Gastrocnemius medialis (tissue), 4 donors: ENCODE measurements at regions of chr17 and their contacts with region 1.

Region 1: GRCh38 chr17:48791128-48792032 is 25.6 kb downstream of the TTLL6 start:
- DNase-seq: peak; percentile 25 to 36
- ATAC-seq: peak in 1 of 2 donors; percentile 54
- H3K4me3 ChIP-seq: no peak overlapping the region
- H3K27ac ChIP-seq: no peak overlapping the region
- H3K4me1 ChIP-seq: no peaks in the 10 kb centered on the region
- H3K27me3 ChIP-seq: peaks cover 0 to 18% (median 5%) of the 10 kb centered on the region in 3 donors
- CTCF ChIP-seq: peak; percentile 27 to 55 (median 46)
- POLR2A ChIP-seq: no peak

Region 2: DNA sequence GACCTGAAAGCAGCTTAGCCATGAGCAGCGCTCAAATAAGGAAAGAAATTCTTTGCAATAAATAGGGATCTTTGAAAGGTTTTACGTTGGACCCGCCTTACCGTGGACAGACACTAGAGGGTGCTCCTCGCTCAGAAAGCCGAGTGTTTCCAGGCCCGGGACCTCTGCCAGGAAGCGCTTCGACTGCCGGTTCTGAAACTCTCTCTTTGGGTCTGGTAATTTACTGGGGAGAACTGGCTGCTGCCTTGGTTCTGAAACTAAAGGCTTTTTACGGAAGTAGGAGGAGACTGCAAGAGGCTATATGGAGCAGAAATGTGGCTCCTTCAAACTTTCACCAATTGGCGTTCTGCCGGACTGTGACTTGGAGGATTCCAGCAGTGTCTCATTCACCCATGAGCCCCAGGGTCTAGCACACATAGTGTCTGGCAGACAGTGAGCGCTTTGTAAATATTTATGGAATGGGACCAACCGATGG is 119.6 kb before region 1 on chr17:
- in situ Hi-C with region 1: loop called in 2 of 4 experiments (anchors 10 kb)
- intact Hi-C with region 1: loop called (anchors 5 kb)
- DNase-seq: peak; percentile 50 to 61
- ATAC-seq: peak; percentile 84 to 92
- H3K4me3 ChIP-seq: peak overlapping the region; percentile 35 to 57 (median 48)
- H3K27ac ChIP-seq: no peak overlapping the region
- H3K4me1 ChIP-seq: no peaks in the 10 kb centered on the region
- H3K27me3 ChIP-seq: peaks cover 0 to 25% (median 15%) of the 10 kb centered on the region in 3 donors
- CTCF ChIP-seq: peak; percentile 69 to 91 (median 81)
- POLR2A ChIP-seq: no peak

Region 3: DNA sequence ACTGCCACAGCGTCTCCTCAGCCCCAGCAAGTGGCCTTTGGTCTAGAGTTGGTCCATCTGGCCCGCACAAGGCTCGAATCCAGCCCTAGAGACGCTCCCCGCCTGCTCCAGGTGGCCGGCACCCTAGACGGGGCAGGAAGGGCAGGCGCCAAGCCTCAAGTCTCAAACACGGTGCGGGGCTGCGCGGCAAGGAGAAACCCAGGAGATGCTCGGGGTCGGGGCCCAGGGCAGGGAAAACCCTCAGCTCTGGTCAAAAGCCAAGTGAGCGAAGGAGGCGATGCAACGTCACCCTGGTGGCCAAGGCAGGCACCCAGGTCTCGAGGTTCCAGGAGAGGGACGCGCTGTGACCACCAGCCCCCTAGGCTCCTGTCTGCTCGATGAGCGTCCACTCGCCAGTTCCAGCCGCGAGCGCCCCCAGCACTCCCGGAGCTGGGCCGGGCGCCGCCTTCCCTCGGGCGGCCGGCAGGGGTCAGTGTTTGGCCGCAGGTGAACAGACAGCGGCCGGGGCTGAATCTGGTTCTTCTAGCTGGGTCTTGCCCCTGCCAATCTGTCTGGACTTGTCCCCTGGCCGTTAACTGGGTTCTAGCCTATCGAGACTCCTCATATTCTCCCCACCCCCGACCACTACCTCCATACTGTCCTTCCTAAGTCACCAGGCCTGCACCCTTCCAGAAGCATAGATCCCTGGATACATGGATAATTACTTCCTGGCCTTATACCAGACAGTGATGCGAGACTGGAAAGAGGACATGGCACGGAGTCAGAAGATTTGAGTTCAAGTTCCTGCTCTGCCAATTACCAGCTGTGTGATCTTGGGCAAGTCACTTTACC is 113.0 kb before region 1 on chr17:
- in situ Hi-C with region 1: loop called in 3 of 4 experiments (anchors 10 kb)
- intact Hi-C with region 1: loop called (anchors 5 kb)
- DNase-seq: peak; percentile 7 to 29
- ATAC-seq: peak; percentile 39 to 71
- H3K4me3 ChIP-seq: no peak overlapping the region
- H3K27ac ChIP-seq: no peak overlapping the region
- H3K4me1 ChIP-seq: peaks cover 0 to 4% of the 10 kb centered on the region in 2 donors
- H3K27me3 ChIP-seq: peaks cover 5 to 20% (median 10%) of the 10 kb centered on the region in 3 donors
- CTCF ChIP-seq: peak; percentile 64 to 93 (median 84)
- POLR2A ChIP-seq: no peak